BJ (cell line): ENCODE measurements at regions of chr22 and their contacts with region 1.

Region 1: DNA sequence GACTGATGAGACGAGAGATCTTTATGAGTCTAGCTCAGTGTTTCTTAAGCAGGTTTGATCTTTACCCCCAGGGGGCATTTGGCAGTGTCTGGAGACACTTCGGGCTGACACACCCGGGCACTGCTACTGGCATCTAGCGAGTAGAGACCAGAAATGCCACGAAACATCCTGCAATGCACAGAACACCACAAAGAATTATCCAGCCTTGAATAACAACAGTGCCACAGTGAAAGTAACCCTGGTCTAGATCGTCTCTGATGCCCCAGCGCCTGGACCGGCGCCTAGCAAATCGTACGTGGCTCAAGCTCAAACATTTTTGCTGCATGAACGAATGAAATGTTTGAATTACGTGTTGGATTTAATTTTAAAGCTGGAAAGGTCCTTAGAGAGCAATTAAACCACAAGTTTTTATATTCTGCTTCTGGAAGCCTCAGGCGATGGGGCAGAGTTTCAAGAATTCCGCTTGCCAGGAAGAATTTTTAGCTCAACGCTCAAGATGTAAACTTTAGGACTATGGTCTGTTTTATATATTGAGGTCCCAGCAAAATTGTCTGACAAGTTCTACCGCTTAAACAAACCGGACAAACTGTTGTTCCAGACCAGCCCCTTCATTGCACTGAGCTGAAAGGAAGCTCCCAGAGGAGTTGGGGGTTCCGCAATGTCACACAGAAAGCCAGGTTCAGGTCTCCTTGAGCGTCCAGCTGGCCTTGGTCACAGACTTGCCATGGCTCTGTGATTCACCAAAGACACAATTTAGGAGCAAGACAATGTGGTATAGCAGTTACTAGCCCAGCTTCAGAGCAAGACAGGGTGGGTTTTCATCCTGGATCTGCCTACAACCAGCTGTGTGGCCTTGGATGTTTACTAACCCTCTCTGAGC is 44.2 kb upstream of the SMTN start:
- DNase-seq: peak; percentile 83
- H3K4me3 ChIP-seq: no peak overlapping the region
- H3K27me3 ChIP-seq: 0 out of 2 replicates have a peak, but pooled peaks cover 1% of the 10 kb centered on the region
- CTCF ChIP-seq: peak; percentile 30

Region 2: GRCh38 chr22:30680991-30681770 is 355.7 kb before region 1 on chr22:
- CTCF ChIA-PET with region 1: no interaction called
- POLR2A ChIA-PET with region 1: interaction called, 17 read pairs
- DNase-seq: no peak
- H3K4me3 ChIP-seq: no peak overlapping the region
- H3K27me3 ChIP-seq: no peaks in the 10 kb centered on the region
- CTCF ChIP-seq: no peak